Activated B cell treated with CpG ODN at 0.5 μM for 24 hours (primary cell): ENCODE measurements at regions of chr19 and their contacts with region 1.

Region 1: DNA sequence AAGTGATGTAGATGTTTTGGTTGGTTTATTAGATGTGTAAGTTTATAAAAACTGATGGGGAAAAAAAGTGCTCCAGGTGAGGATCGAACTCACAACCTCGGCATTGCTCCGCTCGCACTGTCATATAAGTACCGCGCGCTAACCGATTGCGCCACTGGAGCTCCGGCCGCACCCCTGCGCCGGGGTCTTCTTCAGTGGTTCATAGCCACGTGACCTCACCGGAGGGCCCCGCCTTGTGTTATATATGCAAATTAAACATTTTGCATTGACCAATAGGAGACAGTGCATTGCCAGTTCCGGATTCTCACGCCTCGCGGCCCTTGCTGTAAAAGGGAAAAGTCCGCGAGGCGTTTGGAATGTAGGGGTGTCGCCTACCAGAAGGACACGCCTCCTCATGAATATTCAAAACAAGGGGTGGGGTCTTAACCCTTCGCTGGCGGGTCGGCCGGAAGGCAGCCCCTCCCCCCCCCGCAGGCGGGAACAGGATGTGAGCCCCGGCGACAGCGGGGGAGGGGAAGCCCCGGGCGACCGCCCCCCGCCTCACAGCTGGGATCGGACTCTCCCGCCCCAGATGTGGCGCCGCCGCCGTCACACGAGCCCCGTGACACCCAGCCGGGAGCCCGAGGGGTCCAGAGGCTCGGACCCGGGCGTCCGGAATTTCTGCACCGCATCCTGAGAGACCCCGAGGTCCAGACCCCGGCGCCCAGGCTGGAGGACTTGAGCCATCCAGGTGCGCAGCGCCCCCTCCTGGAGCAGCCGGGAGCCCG is at the start of gene PLEKHG2:
- DNase-seq: peak; percentile 97
- ATAC-seq: peak; percentile 59
- H3K4me3 Mint-ChIP-seq: peak within 1 kb of the TSS; percentile 89
- H3K27ac Mint-ChIP-seq: peak within 1 kb of the TSS; percentile 98
- H3K4me1 Mint-ChIP-seq: peaks cover 59% of the 10 kb centered on the region
- H3K27me3 Mint-ChIP-seq: peaks cover 4% of the 10 kb centered on the region
- CTCF ChIP-seq: no peak
- total RNA-seq, gene PLEKHG2: 111 and 125 TPM in 2 replicates

Region 2: DNA sequence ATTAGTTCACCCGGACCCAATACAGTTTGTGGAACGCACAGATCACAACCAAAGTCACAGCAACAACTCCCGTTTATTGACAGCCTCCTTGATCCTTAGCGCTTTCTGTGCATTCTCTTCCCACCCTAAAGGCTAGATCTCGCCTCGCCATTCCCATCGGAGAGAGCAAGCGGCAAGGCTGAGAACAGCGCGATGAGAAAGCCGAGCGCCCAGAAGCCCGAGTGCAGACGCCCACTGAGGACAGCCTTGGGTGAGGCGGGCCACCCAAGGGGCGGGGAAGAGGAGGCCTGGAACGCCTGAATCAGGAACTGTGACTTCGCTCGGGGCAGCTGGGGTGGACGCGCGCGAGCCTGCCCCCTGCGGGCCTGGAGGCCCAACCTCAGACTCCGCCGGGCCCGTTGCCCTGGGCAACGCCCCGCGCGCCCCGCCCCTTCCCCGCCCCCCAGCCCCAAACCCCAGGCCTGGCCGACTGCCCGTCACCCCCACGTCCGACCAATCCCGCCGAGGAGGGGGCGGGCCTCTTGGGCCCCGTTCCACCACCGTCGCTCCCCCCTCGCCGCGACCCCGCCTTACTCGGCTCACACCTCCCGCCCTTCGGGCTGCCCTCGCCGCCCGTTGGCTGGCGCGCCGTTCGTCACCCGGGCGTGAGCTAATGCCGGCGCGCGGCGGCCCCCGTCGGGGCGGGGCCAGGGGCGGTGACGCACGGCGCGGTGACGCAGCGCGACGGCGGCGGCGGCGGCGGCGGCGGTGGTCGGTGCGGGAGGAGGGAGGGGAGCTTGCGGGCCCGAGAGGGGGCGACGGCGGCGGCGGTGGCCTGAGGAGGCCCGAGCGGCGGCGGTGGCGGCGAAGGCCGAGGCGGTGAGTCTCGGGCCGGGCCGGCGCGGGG is 70.3 kb before region 1 on chr19 and contains the start of gene SAMD4B:
- CTCF ChIA-PET with region 1: interaction called, 15 read pairs
- POLR2A ChIA-PET with region 1: interaction called, 11 read pairs
- intact Hi-C with region 1: loop called (anchors 1 kb)
- DNase-seq: peak; percentile 97
- ATAC-seq: peak; percentile 91
- H3K4me3 Mint-ChIP-seq: peak within 1 kb of the TSS; percentile 99
- H3K27ac Mint-ChIP-seq: peak within 1 kb of the TSS; percentile 97
- H3K4me1 Mint-ChIP-seq: peaks cover 69% of the 10 kb centered on the region
- H3K27me3 Mint-ChIP-seq: no peaks in the 10 kb centered on the region
- CTCF ChIP-seq: no peak
- total RNA-seq, gene SAMD4B: 53.0 and 60.7 TPM in 2 replicates

Region 3: DNA sequence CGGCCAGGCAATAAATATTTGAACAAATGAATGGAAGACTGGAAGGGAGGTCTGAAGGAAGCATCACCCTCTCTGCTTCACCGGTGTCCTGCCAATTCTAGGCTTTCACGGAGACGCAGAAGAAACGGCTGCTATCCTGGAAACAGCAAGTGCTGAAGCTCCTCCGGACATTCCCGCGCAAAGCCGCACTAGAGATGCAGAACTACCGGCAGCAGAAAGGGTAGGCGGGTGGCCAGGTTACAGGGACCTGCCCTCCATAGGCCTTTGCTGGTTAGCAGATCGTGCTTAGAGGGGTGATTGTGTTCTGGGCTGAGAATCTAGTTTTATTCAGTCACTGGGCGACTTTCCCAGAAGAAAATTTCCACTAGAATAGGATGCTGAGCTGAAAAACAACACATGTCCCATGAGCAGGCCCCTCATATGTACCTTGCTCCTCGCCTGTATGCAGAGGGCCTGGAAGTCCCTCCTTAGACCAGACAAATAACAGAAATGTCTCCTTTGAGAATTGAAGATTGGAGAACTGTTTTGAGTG is 32.4 kb before region 1 on chr19:
- CTCF ChIA-PET with region 1: no interaction called
- POLR2A ChIA-PET with region 1: no interaction called
- intact Hi-C with region 1: no loop called
- DNase-seq: no peak
- ATAC-seq: no peak
- H3K4me3 Mint-ChIP-seq: no peak overlapping the region
- H3K27ac Mint-ChIP-seq: no peak overlapping the region
- H3K4me1 Mint-ChIP-seq: no peaks in the 10 kb centered on the region
- H3K27me3 Mint-ChIP-seq: no peaks in the 10 kb centered on the region
- CTCF ChIP-seq: no peak

Region 4: DNA sequence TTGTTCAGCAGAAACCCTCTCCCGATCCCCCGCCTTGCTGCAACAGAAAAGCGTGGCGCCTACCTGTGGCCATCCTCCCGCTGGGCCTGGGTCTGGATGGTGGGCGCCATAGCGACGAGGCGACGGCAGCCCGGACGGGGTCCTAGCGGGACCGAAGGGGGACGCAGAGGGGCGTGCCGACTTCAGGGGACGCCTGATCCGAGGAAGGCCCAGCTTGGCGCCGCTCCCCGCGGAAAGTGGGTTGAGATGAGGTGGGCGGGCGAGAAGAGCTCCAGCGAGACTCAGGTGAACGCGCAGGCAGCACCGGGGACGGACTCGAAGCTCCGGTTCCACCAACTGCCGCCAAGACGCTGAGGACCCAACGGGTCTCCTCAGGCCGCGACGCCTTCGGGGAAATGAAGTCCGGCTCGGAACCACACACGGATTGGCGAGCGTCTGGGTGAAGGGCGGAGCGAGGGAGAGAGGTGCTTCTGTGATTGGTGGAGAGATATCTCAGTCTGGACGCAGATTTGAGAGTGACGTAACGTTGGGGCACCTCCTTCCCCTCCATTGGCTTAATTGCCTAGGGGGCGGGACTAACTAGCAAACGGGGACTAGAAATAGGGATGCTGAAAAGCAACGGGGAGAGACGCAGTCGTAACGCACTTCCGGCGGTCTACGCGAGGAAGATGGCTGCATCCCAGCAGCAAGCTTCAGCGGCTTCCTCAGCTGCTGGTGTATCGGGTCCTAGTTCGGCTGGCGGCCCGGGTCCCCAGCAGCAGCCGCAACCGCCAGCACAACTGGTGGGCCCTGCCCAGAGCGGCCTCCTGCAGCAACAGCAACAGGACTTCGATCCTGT is 21.3 kb before region 1 on chr19 and contains the starts of genes MED29 and PAF1:
- CTCF ChIA-PET with region 1: interaction called, 168 read pairs
- POLR2A ChIA-PET with region 1: interaction called, 213 read pairs
- intact Hi-C with region 1: loop called (anchors 1 kb)
- DNase-seq: peak; percentile 84
- ATAC-seq: peak; percentile 91
- H3K4me3 Mint-ChIP-seq: peak within 1 kb of the TSS; percentile 91
- H3K27ac Mint-ChIP-seq: peak within 1 kb of the TSS; percentile 98
- H3K4me1 Mint-ChIP-seq: peaks cover 38% of the 10 kb centered on the region
- H3K27me3 Mint-ChIP-seq: no peaks in the 10 kb centered on the region
- CTCF ChIP-seq: no peak
- total RNA-seq, gene MED29: 38.0 and 39.0 TPM in 2 replicates
- total RNA-seq, gene PAF1: 50.3 and 52.4 TPM in 2 replicates

Region 5: GRCh38 chr19:39435499-39436349 is 23.4 kb after region 1 on chr19 and contains the start of gene RPS16:
- CTCF ChIA-PET with region 1: interaction called, 5 read pairs
- POLR2A ChIA-PET with region 1: interaction called, 285 read pairs
- intact Hi-C with region 1: loop called (anchors 1 kb)
- DNase-seq: peak; percentile 98
- ATAC-seq: peak; percentile 92
- H3K4me3 Mint-ChIP-seq: peak within 1 kb of the TSS; percentile 98
- H3K27ac Mint-ChIP-seq: peak within 1 kb of the TSS; percentile 96
- H3K4me1 Mint-ChIP-seq: peaks cover 53% of the 10 kb centered on the region
- H3K27me3 Mint-ChIP-seq: no peaks in the 10 kb centered on the region
- CTCF ChIP-seq: no peak
- total RNA-seq, gene RPS16: 4,002 and 4,656 TPM in 2 replicates

Region 6: GRCh38 chr19:39507715-39508364 is 95.6 kb after region 1 on chr19:
- CTCF ChIA-PET with region 1: no interaction called
- POLR2A ChIA-PET with region 1: no interaction called
- intact Hi-C with region 1: no loop called
- DNase-seq: no peak
- ATAC-seq: no peak
- H3K4me3 Mint-ChIP-seq: peak overlapping the region; percentile 83
- H3K27ac Mint-ChIP-seq: no peak overlapping the region
- H3K4me1 Mint-ChIP-seq: peaks cover 25% of the 10 kb centered on the region
- H3K27me3 Mint-ChIP-seq: peaks cover 31% of the 10 kb centered on the region
- CTCF ChIP-seq: no peak

Region 7: GRCh38 chr19:39617745-39618144 is 205.5 kb after region 1 on chr19:
- CTCF ChIA-PET with region 1: no interaction called
- POLR2A ChIA-PET with region 1: no interaction called
- intact Hi-C with region 1: no loop called
- DNase-seq: no peak
- ATAC-seq: no peak
- H3K4me3 Mint-ChIP-seq: no peak overlapping the region
- H3K27ac Mint-ChIP-seq: no peak overlapping the region
- H3K4me1 Mint-ChIP-seq: no peaks in the 10 kb centered on the region
- H3K27me3 Mint-ChIP-seq: peaks cover 40% of the 10 kb centered on the region
- CTCF ChIP-seq: no peak

Region 8: DNA sequence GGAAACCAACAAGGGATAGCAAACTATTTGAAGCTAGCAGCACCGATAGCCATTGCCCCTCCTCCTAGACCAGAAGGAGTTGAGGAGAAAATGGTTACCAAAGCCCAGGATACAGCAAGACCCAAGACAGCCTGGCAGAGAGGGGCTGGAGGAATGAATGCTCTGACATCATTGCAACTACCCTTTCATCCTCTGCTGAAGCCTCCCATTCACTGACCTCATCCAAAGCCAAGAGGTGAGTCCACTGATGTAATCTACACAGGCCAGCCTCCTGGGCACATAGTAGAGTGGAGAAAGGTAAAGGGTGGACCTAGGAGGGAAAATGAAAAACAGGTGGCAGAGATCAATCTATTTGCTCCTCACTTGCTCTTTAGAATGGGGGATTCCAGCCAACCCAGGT is 721.2 kb after region 1 on chr19:
- CTCF ChIA-PET with region 1: no interaction called
- POLR2A ChIA-PET with region 1: no interaction called
- intact Hi-C with region 1: no loop called
- DNase-seq: no peak
- ATAC-seq: no peak
- H3K4me3 Mint-ChIP-seq: no peak overlapping the region
- H3K27ac Mint-ChIP-seq: no peak overlapping the region
- H3K4me1 Mint-ChIP-seq: no peaks in the 10 kb centered on the region
- H3K27me3 Mint-ChIP-seq: peaks cover 29% of the 10 kb centered on the region
- CTCF ChIP-seq: no peak